ENCODE measurements at regions of chr22 and their contacts with region 1.

Region 1: DNA sequence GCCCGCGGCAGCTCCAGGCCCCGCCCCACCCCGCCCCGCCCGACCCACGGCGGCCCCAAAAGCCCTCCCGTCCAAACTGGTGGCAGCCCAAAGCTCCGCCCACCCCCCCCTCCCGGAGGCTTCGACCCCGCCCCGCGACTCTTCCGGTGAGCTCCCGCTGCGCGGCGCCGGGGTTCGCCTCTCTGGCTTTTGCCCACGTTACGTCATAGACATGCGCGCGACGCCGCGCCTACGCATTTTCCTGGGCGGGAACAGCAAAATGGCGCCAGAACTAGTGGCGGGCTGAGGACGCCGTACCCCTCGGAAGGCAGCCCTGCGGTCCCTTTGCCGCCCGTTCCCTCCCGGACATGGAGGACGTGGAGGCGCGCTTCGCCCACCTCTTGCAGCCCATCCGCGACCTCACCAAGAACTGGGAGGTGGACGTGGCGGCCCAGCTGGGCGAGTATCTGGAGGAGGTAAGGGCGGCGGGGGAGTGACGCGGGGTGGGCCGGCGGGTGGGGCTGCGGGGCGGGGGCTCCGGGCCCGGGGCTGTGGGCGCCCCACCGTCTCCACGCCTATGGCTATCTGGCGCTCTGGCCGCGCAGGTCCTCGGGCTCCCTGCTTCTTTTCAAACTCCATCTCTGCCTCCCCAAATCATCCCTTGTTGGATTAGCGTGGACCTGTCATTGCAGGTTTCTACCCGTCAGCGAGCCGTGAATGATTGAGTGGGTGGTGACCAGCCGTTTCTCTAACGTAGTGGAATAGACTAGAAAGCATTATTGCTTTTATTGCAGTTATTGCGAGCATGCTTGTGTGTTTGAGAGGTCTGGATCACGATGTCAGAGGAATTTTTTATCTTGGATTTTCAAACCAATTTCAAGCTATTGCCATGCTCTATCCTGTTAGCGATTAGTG is at the start of gene NCAPH2:
- DNase-seq: peak in 10 of 14 experiments; percentile 94 to 99 (median 97)
- ATAC-seq: peak; percentile 75
- H3K4me3 ChIP-seq: peak within 1 kb of the TSS; percentile 92
- H3K4me3 Mint-ChIP-seq: peak within 1 kb of the TSS; percentile 94
- H3K27ac ChIP-seq: peak within 1 kb of the TSS; percentile 89 to 92
- H3K27ac Mint-ChIP-seq: peak within 1 kb of the TSS; percentile 95
- H3K4me1 ChIP-seq: peaks cover 38% of the 10 kb centered on the region
- H3K4me1 Mint-ChIP-seq: peaks cover 21% of the 10 kb centered on the region
- H3K27me3 ChIP-seq: no peaks in the 10 kb centered on the region
- H3K27me3 Mint-ChIP-seq: no peaks in the 10 kb centered on the region
- CTCF ChIP-seq: no peak
- total RNA-seq, gene NCAPH2: 184 to 185 TPM

Region 2: DNA sequence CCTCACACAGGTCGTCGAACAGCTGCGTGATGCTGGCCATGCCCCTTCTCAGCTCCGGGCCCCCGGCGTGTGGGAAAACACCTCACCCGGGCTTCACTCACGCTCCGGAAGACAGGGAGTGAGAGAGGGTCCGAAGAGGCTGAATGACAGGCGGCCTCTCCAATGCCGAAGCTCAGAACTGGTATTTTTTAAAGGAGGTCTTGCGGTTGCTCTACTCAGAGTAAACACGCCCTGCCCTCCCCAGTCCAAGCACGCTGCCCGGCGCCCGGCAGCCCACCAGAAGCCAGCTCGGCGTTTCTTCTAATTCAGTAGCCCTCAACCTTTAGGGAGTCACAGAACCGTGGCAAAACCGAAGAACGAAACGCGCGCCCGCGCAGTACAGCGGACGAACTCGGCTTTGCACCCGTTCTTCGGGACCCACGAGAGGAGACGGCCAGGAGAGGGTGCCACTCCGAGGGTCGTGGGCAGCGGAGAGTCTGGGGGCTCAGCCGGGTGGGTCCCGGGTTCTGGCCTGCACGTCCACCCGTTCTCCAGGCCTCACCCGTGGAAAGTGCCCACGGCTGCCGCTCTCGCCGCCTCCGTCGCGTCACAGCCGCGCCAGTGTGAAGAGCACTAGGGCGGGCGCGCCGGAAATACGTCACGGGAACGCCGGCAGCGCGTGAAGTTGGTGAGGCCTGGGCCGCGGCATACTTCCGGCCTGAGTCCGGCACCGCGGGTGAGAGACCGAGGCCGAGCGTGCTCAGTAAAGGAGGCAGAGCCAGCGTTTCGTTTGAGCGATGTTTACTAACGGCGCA is 263.6 kb before region 1 on chr22 and contains the start of gene TUBGCP6:
- CTCF ChIA-PET with region 1: no interaction called
- POLR2A ChIA-PET with region 1: interaction called, 3 read pairs
- intact Hi-C with region 1: loop called in 1 of 2 experiments (anchors 1 kb)
- DNase-seq: peak; percentile 76 to 97 (median 90)
- ATAC-seq: peak; percentile 73
- H3K4me3 ChIP-seq: peak within 1 kb of the TSS; percentile 100
- H3K4me3 Mint-ChIP-seq: peak within 1 kb of the TSS; percentile 99
- H3K27ac ChIP-seq: peak within 1 kb of the TSS; percentile 98
- H3K27ac Mint-ChIP-seq: peak within 1 kb of the TSS; percentile 89
- H3K4me1 ChIP-seq: peaks cover 92% of the 10 kb centered on the region
- H3K4me1 Mint-ChIP-seq: peaks cover 47% of the 10 kb centered on the region
- H3K27me3 ChIP-seq: no peaks in the 10 kb centered on the region
- H3K27me3 Mint-ChIP-seq: no peaks in the 10 kb centered on the region
- CTCF ChIP-seq: peak; percentile 33
- total RNA-seq, gene TUBGCP6: 124 to 126 TPM

Region 3: DNA sequence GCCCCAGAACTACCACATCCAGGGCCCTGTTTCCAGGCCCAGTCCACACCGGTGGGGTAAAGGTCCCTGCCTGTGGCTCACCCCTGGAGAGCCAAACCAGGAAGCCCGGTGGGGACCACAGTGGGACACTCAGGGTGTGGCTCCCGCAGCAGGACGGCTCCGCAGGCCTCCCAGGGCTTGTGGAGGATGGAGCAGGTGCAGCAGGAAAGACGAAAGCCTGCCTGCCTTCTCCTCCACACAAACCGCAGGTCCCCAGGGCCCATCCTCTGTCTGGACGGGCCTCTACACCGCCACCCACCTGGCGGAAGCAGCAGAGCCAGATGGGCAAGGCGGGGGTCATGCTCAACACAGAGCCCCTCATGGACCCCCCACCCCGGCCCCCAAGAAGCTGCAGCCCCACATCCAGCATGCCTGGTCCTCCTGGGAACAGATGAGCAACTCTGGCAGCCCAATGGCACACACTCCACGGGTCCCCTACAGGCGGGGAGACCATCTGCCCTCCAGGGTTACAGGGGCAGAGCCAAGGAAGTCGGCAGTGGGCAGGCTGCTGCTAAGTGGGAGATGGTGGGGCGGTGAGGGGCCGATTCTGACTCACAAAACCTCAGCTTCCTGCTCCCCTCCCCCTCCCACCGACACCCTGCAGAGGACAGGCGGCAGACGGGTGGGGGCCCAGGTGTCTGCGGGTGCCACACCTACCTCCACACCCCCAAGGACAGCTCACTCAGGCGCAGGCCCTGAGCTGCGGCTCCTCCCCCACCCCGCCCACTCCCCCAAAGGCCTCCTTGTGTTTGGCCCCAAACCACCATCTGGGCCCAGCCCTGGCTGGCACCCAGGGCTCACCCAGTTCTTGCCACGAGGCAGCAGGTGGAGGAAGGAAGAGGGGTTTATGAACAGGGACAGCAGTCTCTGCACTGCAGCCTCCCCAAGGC is 38.6 kb before region 1 on chr22:
- CTCF ChIA-PET with region 1: interaction called, 5 read pairs
- POLR2A ChIA-PET with region 1: interaction called, 31 read pairs
- intact Hi-C with region 1: loop called (anchors 1 to 5 kb)
- DNase-seq: peak; percentile 88 to 99 (median 98)
- ATAC-seq: peak; percentile 86
- H3K4me3 ChIP-seq: peak overlapping the region; percentile 49
- H3K4me3 Mint-ChIP-seq: peak overlapping the region; percentile 89
- H3K27ac ChIP-seq: peak overlapping the region; percentile 82 to 94
- H3K27ac Mint-ChIP-seq: peak overlapping the region; percentile 94
- H3K4me1 ChIP-seq: peaks cover 72% of the 10 kb centered on the region
- H3K4me1 Mint-ChIP-seq: peaks cover 62% of the 10 kb centered on the region
- H3K27me3 ChIP-seq: no peaks in the 10 kb centered on the region
- H3K27me3 Mint-ChIP-seq: no peaks in the 10 kb centered on the region
- CTCF ChIP-seq: peak; percentile 21

Region 4: GRCh38 chr22:50530877-50531545 is 22.8 kb after region 1 on chr22:
- CTCF ChIA-PET with region 1: interaction called, 42 read pairs
- POLR2A ChIA-PET with region 1: interaction called, 250 read pairs
- intact Hi-C with region 1: no loop called
- DNase-seq: peak; percentile 59 to 90 (median 75)
- ATAC-seq: peak; percentile 46
- H3K4me3 ChIP-seq: peak overlapping the region; percentile 80
- H3K4me3 Mint-ChIP-seq: peak overlapping the region; percentile 87
- H3K27ac ChIP-seq: peak overlapping the region; percentile 90 to 98
- H3K27ac Mint-ChIP-seq: peak overlapping the region; percentile 88
- H3K4me1 ChIP-seq: peaks cover 77% of the 10 kb centered on the region
- H3K4me1 Mint-ChIP-seq: peaks cover 45% of the 10 kb centered on the region
- H3K27me3 ChIP-seq: no peaks in the 10 kb centered on the region
- H3K27me3 Mint-ChIP-seq: peaks cover 13% of the 10 kb centered on the region
- CTCF ChIP-seq: no peak

Region 5: DNA sequence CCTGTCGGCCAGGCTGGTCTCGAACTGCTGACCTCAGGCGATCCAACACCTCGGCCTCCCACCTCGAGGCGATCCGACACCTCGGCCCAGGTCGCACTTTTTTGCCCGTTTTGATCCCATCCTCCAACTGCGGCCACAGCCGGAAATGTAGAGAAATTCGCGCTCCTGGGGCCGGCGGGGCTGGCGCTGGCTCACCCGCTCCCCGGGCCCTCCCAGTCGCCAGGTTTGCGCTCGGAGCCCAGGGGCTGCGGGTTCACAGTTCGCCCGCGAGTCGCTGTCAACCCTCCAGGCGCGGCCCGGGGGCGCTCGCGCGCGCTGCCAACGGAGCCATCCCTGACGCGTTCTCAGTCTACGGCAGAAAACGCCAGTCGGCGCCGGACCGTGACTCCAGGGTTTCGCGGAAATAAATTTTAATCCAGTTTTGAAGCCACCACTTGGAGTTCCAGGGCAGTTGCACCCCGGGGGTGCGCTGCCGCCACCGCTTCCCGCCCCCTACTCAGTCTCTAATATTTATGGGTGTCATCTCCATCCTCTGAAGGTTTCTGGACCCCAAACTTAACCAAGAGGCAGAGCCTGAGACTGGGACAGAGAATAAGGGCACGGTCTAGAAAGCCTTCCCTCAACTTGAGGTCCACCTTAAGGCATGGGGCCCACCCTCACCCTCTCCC is 36.0 kb after region 1 on chr22:
- CTCF ChIA-PET with region 1: no interaction called
- POLR2A ChIA-PET with region 1: interaction called, 52 read pairs
- intact Hi-C with region 1: no loop called
- DNase-seq: peak; percentile 62 to 91 (median 80)
- ATAC-seq: peak; percentile 48
- H3K4me3 ChIP-seq: peak overlapping the region; percentile 41
- H3K4me3 Mint-ChIP-seq: peak overlapping the region; percentile 74
- H3K27ac ChIP-seq: peak overlapping the region; percentile 27 to 44
- H3K27ac Mint-ChIP-seq: peak overlapping the region; percentile 83
- H3K4me1 ChIP-seq: peaks cover 63% of the 10 kb centered on the region
- H3K4me1 Mint-ChIP-seq: peaks cover 45% of the 10 kb centered on the region
- H3K27me3 ChIP-seq: no peaks in the 10 kb centered on the region
- H3K27me3 Mint-ChIP-seq: no peaks in the 10 kb centered on the region
- CTCF ChIP-seq: peak; percentile 67

Region 6: GRCh38 chr22:50582562-50583293 is 74.5 kb after region 1 on chr22 and contains the start of gene CHKB:
- CTCF ChIA-PET with region 1: no interaction called
- POLR2A ChIA-PET with region 1: interaction called, 22 read pairs
- intact Hi-C with region 1: loop called in 1 of 2 experiments (anchors 1 kb)
- DNase-seq: peak; percentile 95 to 99 (median 98)
- ATAC-seq: peak; percentile 92
- H3K4me3 ChIP-seq: peak within 1 kb of the TSS; percentile 63
- H3K4me3 Mint-ChIP-seq: peak within 1 kb of the TSS; percentile 100
- H3K27ac ChIP-seq: peak within 1 kb of the TSS; percentile 91 to 95
- H3K27ac Mint-ChIP-seq: peak within 1 kb of the TSS; percentile 98
- H3K4me1 ChIP-seq: peaks cover 31% of the 10 kb centered on the region
- H3K4me1 Mint-ChIP-seq: peaks cover 35% of the 10 kb centered on the region
- H3K27me3 ChIP-seq: no peaks in the 10 kb centered on the region
- H3K27me3 Mint-ChIP-seq: no peaks in the 10 kb centered on the region
- CTCF ChIP-seq: no peak
- total RNA-seq, gene CHKB: 152 to 156 TPM

Region 7: DNA sequence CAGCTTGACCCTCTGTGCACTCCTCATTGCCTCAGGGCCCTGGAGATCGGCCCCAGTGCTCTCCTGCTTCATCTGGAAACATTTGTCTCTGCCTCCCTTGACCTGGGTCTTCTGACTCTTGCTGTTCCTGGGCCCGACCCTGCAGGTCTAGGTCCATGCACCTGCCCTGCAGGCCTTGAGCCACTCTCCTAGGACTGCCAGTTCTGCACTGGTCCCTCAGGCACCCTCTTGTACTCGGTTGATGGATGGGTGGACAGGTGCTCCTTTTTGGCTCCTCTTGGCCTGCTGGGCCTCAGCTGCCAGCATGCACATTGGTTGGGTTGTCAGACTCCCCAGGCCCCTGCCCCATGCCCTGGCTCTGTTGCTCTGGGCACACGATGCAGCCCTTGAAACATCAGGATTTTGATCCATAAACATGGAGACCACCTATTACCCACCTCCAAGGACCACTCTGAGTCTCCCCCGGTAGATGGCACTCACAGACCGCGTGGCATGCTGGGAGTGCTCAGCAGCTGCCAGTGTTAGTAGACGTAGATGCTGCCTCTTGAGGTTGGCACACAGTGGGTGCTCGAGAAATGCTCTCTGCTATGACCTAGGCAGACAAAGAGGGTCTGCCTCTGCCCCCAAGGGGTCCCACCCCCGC is 209.6 kb after region 1 on chr22:
- CTCF ChIA-PET with region 1: no interaction called
- POLR2A ChIA-PET with region 1: no interaction called
- intact Hi-C with region 1: no loop called
- DNase-seq: no peak
- ATAC-seq: no peak
- H3K4me3 ChIP-seq: no peak overlapping the region
- H3K4me3 Mint-ChIP-seq: no peak overlapping the region
- H3K27ac ChIP-seq: no peak overlapping the region
- H3K27ac Mint-ChIP-seq: no peak overlapping the region
- H3K4me1 ChIP-seq: no peaks in the 10 kb centered on the region
- H3K4me1 Mint-ChIP-seq: no peaks in the 10 kb centered on the region
- H3K27me3 ChIP-seq: peaks cover 0 to 3% of the 10 kb centered on the region in 2 experiments
- H3K27me3 Mint-ChIP-seq: no peaks in the 10 kb centered on the region
- CTCF ChIP-seq: no peak